ENCODE measurements at regions of chr7 and their contacts with region 1.

Region 1: GRCh38 chr7:134605973-134606923 is 40.4 kb upstream of the BPGM start:
- DNase-seq: peak; percentile 47 to 72 (median 59)
- ATAC-seq: peak; percentile 85 to 96 (median 91)
- H3K4me3 ChIP-seq: no peak overlapping the region
- H3K27ac ChIP-seq: peak overlapping the region in 3 of 12 donors; percentile 31 to 59 (median 43)
- H3K4me1 ChIP-seq: peaks cover 0 to 14% (median 2%) of the 10 kb centered on the region in 12 donors
- H3K27me3 ChIP-seq: no peaks in the 10 kb centered on the region
- CTCF ChIP-seq: peak; percentile 89 to 98 (median 93)
- POLR2A ChIP-seq: no peak

Region 2: GRCh38 chr7:134165252-134165651 is 441.0 kb before region 1 on chr7:
- intact Hi-C with region 1: loop called in 1 of 10 experiments (anchors 10 kb)
- DNase-seq: no peak
- ATAC-seq: no peak
- H3K4me3 ChIP-seq: no peak overlapping the region
- H3K27ac ChIP-seq: no peak overlapping the region
- H3K4me1 ChIP-seq: no peaks in the 10 kb centered on the region
- H3K27me3 ChIP-seq: no peaks in the 10 kb centered on the region
- CTCF ChIP-seq: no peak
- POLR2A ChIP-seq: no peak

Region 3: DNA sequence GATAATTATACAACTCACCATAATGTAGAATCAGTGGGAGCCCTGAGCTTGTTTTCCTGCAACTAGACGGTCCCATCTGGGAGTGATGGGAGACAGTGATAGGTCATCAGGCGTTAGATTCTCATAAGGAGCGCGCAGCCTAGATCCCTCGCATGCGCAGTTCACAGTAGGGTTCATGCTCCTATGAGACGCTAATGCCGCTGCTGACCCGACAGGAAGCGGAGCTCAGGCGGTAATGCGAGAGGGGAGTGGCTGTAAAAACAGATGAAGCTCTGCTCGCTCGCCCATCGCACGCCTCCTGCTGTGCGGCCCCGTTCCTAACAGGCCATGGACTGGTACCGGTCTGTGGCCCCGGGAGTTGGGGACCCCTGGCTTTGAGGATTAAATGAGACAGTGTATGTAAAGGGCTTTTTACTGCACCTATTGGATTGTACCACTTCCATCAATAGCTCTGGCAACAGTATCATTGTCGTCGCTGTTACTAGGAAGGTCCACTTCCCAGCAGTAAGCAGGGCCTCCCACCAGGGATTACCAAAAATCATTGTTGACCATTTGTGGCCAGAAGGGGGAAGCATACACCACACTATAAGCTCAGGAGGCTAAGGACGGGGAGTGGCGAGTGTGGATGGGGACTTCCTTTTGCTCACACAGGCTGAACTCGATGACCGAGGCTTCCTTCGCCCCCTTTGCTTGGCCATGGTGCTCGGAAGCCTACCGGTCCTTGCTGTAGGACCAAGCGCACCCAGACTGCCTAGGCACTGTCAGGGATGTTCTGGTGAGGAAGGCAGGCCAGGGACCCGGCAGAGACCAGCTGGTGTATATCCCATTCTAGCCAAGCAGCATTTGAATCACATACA is 173.7 kb before region 1 on chr7:
- intact Hi-C with region 1: loop called (anchors 1 to 5 kb)
- DNase-seq: peak; percentile 82 to 93 (median 91)
- ATAC-seq: peak; percentile 92 to 98 (median 98)
- H3K4me3 ChIP-seq: peak overlapping the region in 11 of 12 donors; percentile 6 to 54 (median 41)
- H3K27ac ChIP-seq: peak overlapping the region in 11 of 12 donors; percentile 51 to 86 (median 77)
- H3K4me1 ChIP-seq: peaks cover 0 to 17% (median 4%) of the 10 kb centered on the region in 12 donors
- H3K27me3 ChIP-seq: peaks cover 0 to 3% (median 0%) of the 10 kb centered on the region in 9 donors
- CTCF ChIP-seq: peak; percentile 60 to 89 (median 82)
- POLR2A ChIP-seq: peak in 1 of 2 donors; percentile 20

Region 4: DNA sequence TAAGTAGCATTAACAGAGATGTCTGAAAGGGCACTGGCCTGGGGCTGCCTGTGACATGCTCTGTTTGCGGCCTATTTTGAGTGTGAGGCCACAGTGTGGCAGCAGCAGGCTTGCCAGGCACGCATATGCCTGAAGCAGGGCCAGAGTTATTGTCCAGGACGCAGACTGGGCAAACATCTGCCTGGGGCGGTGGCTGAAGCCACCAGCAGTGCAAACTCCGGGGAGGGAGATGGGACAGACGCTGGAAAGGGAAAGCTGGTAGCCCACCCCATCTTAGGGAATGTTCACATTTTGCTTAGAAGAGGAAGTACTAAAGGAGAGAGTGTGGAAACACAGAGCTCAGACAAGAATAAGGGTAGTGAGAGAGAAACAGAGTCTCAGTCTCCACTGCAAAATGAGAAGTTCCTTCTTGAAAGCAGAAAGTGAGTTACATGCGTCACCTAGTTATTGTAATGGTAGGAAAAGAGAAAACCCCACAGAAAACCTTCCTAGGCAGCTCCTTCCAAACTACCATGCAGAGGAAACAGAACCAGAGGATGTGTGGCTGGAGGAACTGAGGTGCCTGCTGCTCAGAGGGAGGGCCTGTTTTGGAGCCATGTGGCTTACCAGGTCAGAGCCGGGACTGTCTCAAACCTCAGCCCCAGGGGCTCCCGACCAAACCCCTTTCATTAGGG is 161.9 kb before region 1 on chr7:
- intact Hi-C with region 1: loop called in 1 of 10 experiments (anchors 5 kb)
- DNase-seq: peak in 4 of 5 donors; percentile 37 to 69 (median 52)
- ATAC-seq: peak; percentile 80 to 93 (median 84)
- H3K4me3 ChIP-seq: no peak overlapping the region
- H3K27ac ChIP-seq: peak overlapping the region in 7 of 12 donors; percentile 19 to 61 (median 47)
- H3K4me1 ChIP-seq: peaks cover 0 to 30% (median 4%) of the 10 kb centered on the region in 12 donors
- H3K27me3 ChIP-seq: no peaks in the 10 kb centered on the region
- CTCF ChIP-seq: peak in 8 of 12 donors; percentile 25 to 46 (median 30)
- POLR2A ChIP-seq: no peak

Region 5: GRCh38 chr7:134514663-134515062 is 91.6 kb before region 1 on chr7:
- intact Hi-C with region 1: loop called in 9 of 10 experiments (anchors 1 to 5 kb)
- DNase-seq: peak in 1 of 5 donors; percentile 18
- ATAC-seq: peak in 3 of 4 donors; percentile 16 to 58 (median 49)
- H3K4me3 ChIP-seq: no peak overlapping the region
- H3K27ac ChIP-seq: no peak overlapping the region
- H3K4me1 ChIP-seq: peaks cover 0 to 13% (median 0%) of the 10 kb centered on the region in 12 donors
- H3K27me3 ChIP-seq: no peaks in the 10 kb centered on the region
- CTCF ChIP-seq: peak; percentile 66 to 88 (median 82)
- POLR2A ChIP-seq: no peak

Region 6: DNA sequence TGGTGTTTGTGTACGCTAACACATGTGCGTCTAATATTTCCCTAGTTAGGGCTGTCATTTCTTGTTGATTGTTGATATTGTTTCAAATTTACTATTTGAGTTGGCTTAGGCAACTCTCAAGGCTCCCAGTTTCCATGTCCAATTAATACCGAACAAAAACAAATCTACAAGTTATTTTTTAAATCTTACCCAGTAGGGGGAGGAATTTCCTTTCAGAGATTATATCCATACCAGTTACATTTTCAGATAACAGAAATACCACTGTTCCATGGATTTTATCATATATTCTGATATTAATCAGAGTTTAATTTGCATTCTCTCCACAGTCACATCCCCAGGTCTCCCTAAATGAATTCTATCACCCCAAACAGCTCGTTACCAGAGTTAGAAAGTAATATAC is 86.1 kb before region 1 on chr7:
- intact Hi-C with region 1: loop called in 8 of 10 experiments (anchors 1 to 5 kb)
- DNase-seq: no peak
- ATAC-seq: no peak
- H3K4me3 ChIP-seq: no peak overlapping the region
- H3K27ac ChIP-seq: no peak overlapping the region
- H3K4me1 ChIP-seq: peaks cover 0 to 5% (median 0%) of the 10 kb centered on the region in 12 donors
- H3K27me3 ChIP-seq: peaks cover 0 to 7% (median 0%) of the 10 kb centered on the region in 9 donors
- CTCF ChIP-seq: peak in 4 of 12 donors; percentile 13 to 32 (median 26)
- POLR2A ChIP-seq: no peak

Region 7: DNA sequence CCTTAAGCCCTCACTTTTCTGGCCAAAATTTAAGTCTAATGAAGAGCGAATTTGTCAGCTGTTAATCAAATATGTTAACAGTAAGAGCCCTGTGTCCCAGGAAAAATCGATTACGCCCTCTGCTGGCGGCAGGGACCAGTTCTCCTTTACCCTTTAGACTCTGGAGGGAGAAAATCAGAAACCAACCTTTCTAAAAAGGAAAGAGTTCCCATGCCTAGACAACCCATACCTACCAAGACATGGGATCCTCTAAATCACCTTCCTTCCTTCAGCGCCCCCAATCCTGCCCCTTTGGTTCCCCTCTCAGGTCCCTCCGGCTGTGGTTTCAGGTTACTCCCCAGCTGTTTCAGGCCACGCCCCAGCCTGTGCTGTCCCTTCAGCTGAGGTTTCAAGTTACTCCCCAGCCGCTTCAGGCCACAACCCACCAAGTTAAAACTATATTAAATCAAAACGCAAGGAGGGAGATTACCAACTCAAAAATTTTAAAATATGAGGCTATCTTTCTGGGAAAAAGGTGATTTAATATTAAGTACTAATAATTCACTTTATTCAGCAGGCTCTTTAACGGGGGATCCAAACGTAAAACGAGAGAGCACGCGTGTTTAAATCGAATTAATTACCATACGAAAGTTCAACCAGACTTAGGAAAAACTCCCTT is 58.7 kb before region 1 on chr7:
- intact Hi-C with region 1: loop called in 3 of 10 experiments (anchors 1 to 5 kb)
- DNase-seq: peak; percentile 64 to 81 (median 70)
- ATAC-seq: peak; percentile 90 to 96 (median 94)
- H3K4me3 ChIP-seq: peak overlapping the region in 10 of 12 donors; percentile 19 to 52 (median 42)
- H3K27ac ChIP-seq: peak overlapping the region in 3 of 12 donors; percentile 12 to 55 (median 46)
- H3K4me1 ChIP-seq: peaks cover 0 to 13% (median 0%) of the 10 kb centered on the region in 12 donors
- H3K27me3 ChIP-seq: peaks cover 0 to 2% (median 0%) of the 10 kb centered on the region in 9 donors
- CTCF ChIP-seq: peak; percentile 69 to 96 (median 84)
- POLR2A ChIP-seq: no peak

Measured in heart left ventricle (tissue), 16 donors.